CD8-positive, alpha-beta T cell (primary cell): ENCODE measurements at regions of chr6 and their contacts with region 1.

Region 1: GRCh38 chr6:30678964-30679726 is 6.3 kb upstream of the DHX16 start:
- DNase-seq: peak; percentile 88 to 98 (median 92)
- ATAC-seq: peak; percentile 32
- H3K4me3 ChIP-seq: peak overlapping the region; percentile 86 to 95
- H3K4me3 Mint-ChIP-seq: peak overlapping the region; percentile 99
- H3K27ac ChIP-seq: peak overlapping the region; percentile 21 to 85
- H3K27ac Mint-ChIP-seq: peak overlapping the region; percentile 99
- H3K4me1 ChIP-seq: peaks cover 27% of the 10 kb centered on the region
- H3K4me1 Mint-ChIP-seq: peaks cover 38% of the 10 kb centered on the region
- H3K27me3 ChIP-seq: no peaks in the 10 kb centered on the region
- H3K27me3 Mint-ChIP-seq: no peaks in the 10 kb centered on the region
- CTCF ChIP-seq: peak; percentile 92

Region 2: DNA sequence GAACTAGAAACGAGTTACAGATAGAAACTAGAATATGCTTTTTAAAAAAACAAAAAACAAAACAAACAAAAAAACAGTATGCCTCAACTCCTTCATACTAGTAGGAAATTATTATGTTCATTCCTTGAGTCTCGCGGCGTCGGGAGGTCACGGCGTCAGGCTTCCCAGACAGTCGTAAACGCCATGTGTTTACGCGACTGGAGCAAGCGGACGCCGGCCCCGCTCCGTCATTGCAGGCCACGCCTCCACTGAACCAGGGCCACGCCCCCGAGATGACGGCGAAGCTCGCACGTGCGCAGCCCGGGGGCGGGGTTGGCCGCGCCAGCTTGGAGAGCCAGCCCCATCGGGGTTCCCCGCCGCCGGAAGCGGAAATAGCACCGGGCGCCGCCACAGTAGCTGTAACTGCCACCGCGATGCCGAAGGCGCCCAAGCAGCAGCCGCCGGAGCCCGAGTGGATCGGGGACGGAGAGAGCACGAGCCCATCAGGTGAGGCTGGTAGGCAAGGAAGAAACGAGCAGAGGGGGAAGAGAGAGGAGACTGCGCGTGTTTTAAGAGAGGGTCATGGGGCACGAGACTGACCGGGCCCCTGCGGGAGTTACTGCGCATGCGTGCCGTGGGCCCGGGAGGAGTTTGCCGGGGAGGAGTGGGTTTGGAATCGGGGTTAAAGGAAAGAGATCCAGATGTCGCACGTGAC is 107.9 kb before region 1 on chr6 and contains the start of gene ABCF1:
- CTCF ChIA-PET with region 1: no interaction called
- POLR2A ChIA-PET with region 1: interaction called, 3 read pairs
- intact Hi-C with region 1: loop called in 1 of 2 experiments (anchors 5 kb)
- DNase-seq: peak; percentile 99 to 100 (median 100)
- ATAC-seq: peak; percentile 96
- H3K4me3 ChIP-seq: peak within 1 kb of the TSS; percentile 64 to 86
- H3K4me3 Mint-ChIP-seq: peak within 1 kb of the TSS; percentile 98
- H3K27ac ChIP-seq: peak within 1 kb of the TSS; percentile 90 to 98
- H3K27ac Mint-ChIP-seq: peak within 1 kb of the TSS; percentile 99
- H3K4me1 ChIP-seq: peaks cover 54% of the 10 kb centered on the region
- H3K4me1 Mint-ChIP-seq: peaks cover 69% of the 10 kb centered on the region
- H3K27me3 ChIP-seq: no peaks in the 10 kb centered on the region
- H3K27me3 Mint-ChIP-seq: no peaks in the 10 kb centered on the region
- CTCF ChIP-seq: no peak
- total RNA-seq, gene ABCF1: 121 to 130 TPM

Region 3: DNA sequence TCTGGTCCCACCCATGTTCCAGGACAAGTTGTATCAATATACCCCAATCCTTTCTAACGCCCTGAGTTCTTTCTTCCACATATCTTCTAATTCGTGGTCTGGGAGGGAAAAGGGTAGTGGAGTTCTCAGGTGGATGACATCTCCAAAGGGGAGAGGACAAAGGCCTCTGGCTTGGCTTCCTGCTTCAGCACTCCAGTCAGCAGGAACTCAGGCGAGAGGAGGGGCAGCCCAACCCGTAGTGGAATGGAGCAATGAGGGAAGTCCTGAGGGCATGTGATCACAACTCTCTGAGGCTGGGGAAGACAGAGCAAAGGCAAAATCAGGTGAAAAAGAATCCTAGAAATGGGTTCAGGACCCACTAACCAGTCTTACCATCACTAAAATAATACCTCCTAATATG is 21.2 kb after region 1 on chr6:
- CTCF ChIA-PET with region 1: interaction called, 10 read pairs
- POLR2A ChIA-PET with region 1: interaction called, 8 read pairs
- intact Hi-C with region 1: no loop called
- DNase-seq: no peak
- ATAC-seq: no peak
- H3K4me3 ChIP-seq: no peak overlapping the region
- H3K4me3 Mint-ChIP-seq: no peak overlapping the region
- H3K27ac ChIP-seq: no peak overlapping the region
- H3K27ac Mint-ChIP-seq: no peak overlapping the region
- H3K4me1 ChIP-seq: no peaks in the 10 kb centered on the region
- H3K4me1 Mint-ChIP-seq: no peaks in the 10 kb centered on the region
- H3K27me3 ChIP-seq: no peaks in the 10 kb centered on the region
- H3K27me3 Mint-ChIP-seq: no peaks in the 10 kb centered on the region
- CTCF ChIP-seq: no peak

Region 4: GRCh38 chr6:30711758-30712380 is 32.7 kb after region 1 on chr6:
- CTCF ChIA-PET with region 1: interaction called, 879 read pairs
- POLR2A ChIA-PET with region 1: interaction called, 324 read pairs
- intact Hi-C with region 1: loop called (anchors 1 kb)
- DNase-seq: no peak
- ATAC-seq: no peak
- H3K4me3 ChIP-seq: no peak overlapping the region
- H3K4me3 Mint-ChIP-seq: no peak overlapping the region
- H3K27ac ChIP-seq: peak overlapping the region in 1 of 2 experiments; percentile 39
- H3K27ac Mint-ChIP-seq: peak overlapping the region; percentile 30
- H3K4me1 ChIP-seq: peaks cover 7% of the 10 kb centered on the region
- H3K4me1 Mint-ChIP-seq: peaks cover 21% of the 10 kb centered on the region
- H3K27me3 ChIP-seq: no peaks in the 10 kb centered on the region
- H3K27me3 Mint-ChIP-seq: no peaks in the 10 kb centered on the region
- CTCF ChIP-seq: no peak

Region 5: GRCh38 chr6:30800871-30801270 is 121.7 kb after region 1 on chr6:
- CTCF ChIA-PET with region 1: no interaction called
- POLR2A ChIA-PET with region 1: no interaction called
- intact Hi-C with region 1: no loop called
- DNase-seq: no peak
- ATAC-seq: no peak
- H3K4me3 ChIP-seq: no peak overlapping the region
- H3K4me3 Mint-ChIP-seq: no peak overlapping the region
- H3K27ac ChIP-seq: no peak overlapping the region
- H3K27ac Mint-ChIP-seq: no peak overlapping the region
- H3K4me1 ChIP-seq: peaks cover 4% of the 10 kb centered on the region
- H3K4me1 Mint-ChIP-seq: peaks cover 20% of the 10 kb centered on the region
- H3K27me3 ChIP-seq: no peaks in the 10 kb centered on the region
- H3K27me3 Mint-ChIP-seq: no peaks in the 10 kb centered on the region
- CTCF ChIP-seq: no peak

Region 6: DNA sequence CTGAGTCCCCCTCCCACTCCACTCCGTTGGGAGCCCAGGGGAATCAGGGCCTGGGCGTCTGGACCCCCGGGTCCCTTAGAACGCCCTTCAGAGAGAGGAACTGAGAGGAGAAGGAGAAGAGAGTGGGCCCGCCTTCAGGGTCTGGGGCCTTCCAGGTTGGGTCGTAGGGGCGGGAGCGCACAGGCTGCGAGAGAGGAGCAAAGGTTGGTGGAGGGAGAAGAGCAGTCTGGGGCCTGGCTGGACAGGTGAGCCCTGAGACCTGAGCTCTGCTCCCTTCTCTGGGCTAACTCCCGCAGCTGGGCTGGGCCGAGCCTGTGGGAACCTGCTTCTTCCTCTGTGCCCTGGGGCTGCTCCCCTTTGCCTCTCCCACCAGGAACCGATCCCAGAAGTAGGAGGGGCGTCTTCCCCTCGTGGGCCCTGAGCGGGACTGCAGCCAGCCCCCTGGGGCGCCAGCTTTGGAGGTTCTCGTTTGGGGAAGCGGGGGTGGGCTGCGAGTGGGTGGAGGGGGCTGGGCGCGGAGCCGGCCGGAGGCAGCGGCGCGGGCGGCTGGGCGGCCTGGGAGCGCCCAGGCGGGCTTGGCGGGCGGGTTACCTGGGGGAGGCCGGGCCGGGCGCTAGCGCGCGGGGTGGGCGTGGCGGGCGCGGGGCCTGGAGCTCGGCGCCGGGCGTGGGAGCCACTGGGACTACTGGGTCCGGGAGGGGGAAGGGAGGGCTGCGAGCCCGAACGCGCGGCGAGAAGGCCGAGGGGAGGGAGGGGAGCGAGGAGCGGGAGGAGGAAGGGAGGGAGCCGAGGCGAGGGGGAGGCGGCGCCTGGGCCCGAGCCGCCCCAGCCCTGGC is 204.8 kb after region 1 on chr6 and contains the start of gene DDR1:
- CTCF ChIA-PET with region 1: interaction called, 10 read pairs
- POLR2A ChIA-PET with region 1: interaction called, 3 read pairs
- intact Hi-C with region 1: loop called in 1 of 2 experiments (anchors 10 kb)
- DNase-seq: peak in 8 of 9 experiments; percentile 25 to 73 (median 52)
- ATAC-seq: peak; percentile 60
- H3K4me3 ChIP-seq: peak within 1 kb of the TSS; percentile 44 to 55
- H3K4me3 Mint-ChIP-seq: peak within 1 kb of the TSS; percentile 82
- H3K27ac ChIP-seq: peak within 1 kb of the TSS in 1 of 2 experiments; percentile 7
- H3K27ac Mint-ChIP-seq: peak within 1 kb of the TSS; percentile 86
- H3K4me1 ChIP-seq: peaks cover 38% of the 10 kb centered on the region
- H3K4me1 Mint-ChIP-seq: peaks cover 38% of the 10 kb centered on the region
- H3K27me3 ChIP-seq: no peaks in the 10 kb centered on the region
- H3K27me3 Mint-ChIP-seq: no peaks in the 10 kb centered on the region
- CTCF ChIP-seq: no peak
- total RNA-seq, gene DDR1: 5.9 to 8.0 TPM